K562 (cell line): ENCODE measurements at regions of chr2 and their contacts with region 1.

Region 1: GRCh38 chr2:200864176-200864976 is at the start of gene CLK1:
- DNase-seq: peak; percentile 77 to 94 (median 81)
- ATAC-seq: peak; percentile 88
- H3K4me3 ChIP-seq: peak within 1 kb of the TSS; percentile 73
- H3K27ac ChIP-seq: peak within 1 kb of the TSS; percentile 98
- H3K4me1 ChIP-seq: peaks cover 9 to 15% of the 10 kb centered on the region in 2 experiments; a peak in 4 of 5 replicates
- H3K27me3 ChIP-seq: no peaks in the 10 kb centered on the region
- CTCF ChIP-seq: no peak
- EP300 ChIP-seq: peak; percentile 38; the same call in 1 of the 2 replicates
- POLR2A ChIP-seq: peak; percentile 97
- RAD21 ChIP-seq: no peak
- polyA plus RNA-seq, gene CLK1: 49.3 to 50.7 TPM

Region 2: DNA sequence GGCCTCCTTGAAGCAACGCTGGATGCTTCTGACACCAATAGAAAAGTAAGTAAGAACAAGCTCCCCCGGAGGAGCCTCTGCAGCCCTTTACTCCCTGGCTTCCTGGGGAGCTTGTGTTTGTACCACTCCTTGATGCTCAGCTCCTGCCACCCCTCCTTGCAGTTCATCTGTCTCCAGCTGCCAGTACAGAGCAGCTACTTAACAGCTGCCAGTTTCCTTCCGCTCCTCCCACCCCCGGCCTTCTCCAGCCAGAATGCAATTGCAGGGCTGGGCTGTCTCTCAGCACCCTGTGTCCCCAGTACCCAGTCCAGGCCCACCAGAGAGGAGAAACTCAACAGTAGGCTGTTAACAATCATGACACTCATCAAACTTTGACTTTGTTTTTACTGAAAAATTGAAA is 169.2 kb before region 1 on chr2:
- CTCF ChIA-PET with region 1: no interaction called
- POLR2A ChIA-PET with region 1: no interaction called
- in situ Hi-C with region 1: no loop called
- intact Hi-C with region 1: no loop called
- DNase-seq: no peak
- ATAC-seq: no peak
- H3K4me3 ChIP-seq: no peak overlapping the region
- H3K27ac ChIP-seq: no peak overlapping the region
- H3K4me1 ChIP-seq: no peaks in the 10 kb centered on the region
- H3K27me3 ChIP-seq: peaks cover 0 to 19% of the 10 kb centered on the region in 2 experiments; a peak in 3 of 5 replicates
- CTCF ChIP-seq: no peak
- EP300 ChIP-seq: no peak
- POLR2A ChIP-seq: no peak
- RAD21 ChIP-seq: no peak

Region 3: GRCh38 chr2:200850512-200851256 is 13.7 kb before region 1 on chr2:
- CTCF ChIA-PET with region 1: no interaction called
- POLR2A ChIA-PET with region 1: interaction called, 27 read pairs
- in situ Hi-C with region 1: no loop called
- intact Hi-C with region 1: no loop called
- DNase-seq: peak in 3 of 4 experiments; percentile 12 to 61 (median 36)
- ATAC-seq: peak; percentile 82
- H3K4me3 ChIP-seq: no peak overlapping the region
- H3K27ac ChIP-seq: no peak overlapping the region
- H3K4me1 ChIP-seq: no peaks in the 10 kb centered on the region; a peak in 1 of 5 replicates
- H3K27me3 ChIP-seq: no peaks in the 10 kb centered on the region
- CTCF ChIP-seq: peak; percentile 36 to 46 (median 43); a peak in 2 of 6 replicates
- EP300 ChIP-seq: no peak
- POLR2A ChIP-seq: no peak
- RAD21 ChIP-seq: peak in 1 of 2 experiments; percentile 35; a peak in 1 of 4 replicates

Region 4: GRCh38 chr2:200888704-200889625 is 24.6 kb after region 1 on chr2 and contains the starts of genes NIF3L1 and PPIL3:
- CTCF ChIA-PET with region 1: no interaction called
- POLR2A ChIA-PET with region 1: interaction called, 28 read pairs
- in situ Hi-C with region 1: no loop called
- intact Hi-C with region 1: loop called (anchors 2 kb)
- DNase-seq: peak; percentile 80 to 98 (median 84)
- ATAC-seq: peak; percentile 89
- H3K4me3 ChIP-seq: peak within 1 kb of the TSS; percentile 46
- H3K27ac ChIP-seq: peak within 1 kb of the TSS; percentile 99
- H3K4me1 ChIP-seq: peaks cover 4 to 16% of the 10 kb centered on the region in 2 experiments; a peak in 4 of 5 replicates
- H3K27me3 ChIP-seq: no peaks in the 10 kb centered on the region
- CTCF ChIP-seq: no peak
- EP300 ChIP-seq: peak; percentile 49
- POLR2A ChIP-seq: peak; percentile 90
- RAD21 ChIP-seq: no peak; a peak in 1 of 4 replicates
- polyA plus RNA-seq, gene NIF3L1: 79.3 to 80.0 TPM
- polyA plus RNA-seq, gene PPIL3: 59.4 to 64.6 TPM